K562 (cell line): ENCODE measurements at regions of chr17 and their contacts with region 1.

Region 1: GRCh38 chr17:17919169-17920107 is 52.8 kb downstream of the TOM1L2 start:
- DNase-seq: peak; percentile 63 to 83 (median 72)
- ATAC-seq: peak; percentile 89
- H3K4me3 ChIP-seq: no peak overlapping the region
- H3K27ac ChIP-seq: peak overlapping the region; percentile 53; the same call in 2 of the 3 replicates
- H3K4me1 ChIP-seq: peaks cover 15 to 29% of the 10 kb centered on the region in 2 experiments; a peak in 4 of 5 replicates
- H3K27me3 ChIP-seq: no peaks in the 10 kb centered on the region
- CTCF ChIP-seq: peak; percentile 81 to 90 (median 83)
- EP300 ChIP-seq: no peak
- POLR2A ChIP-seq: no peak
- RAD21 ChIP-seq: peak; percentile 74 to 88

Region 2: GRCh38 chr17:17675925-17676534 is 243.4 kb before region 1 on chr17:
- CTCF ChIA-PET with region 1: no interaction called
- POLR2A ChIA-PET with region 1: no interaction called
- in situ Hi-C with region 1: no loop called
- intact Hi-C with region 1: loop called (anchors 10 kb)
- DNase-seq: no peak
- ATAC-seq: peak; percentile 45; the same call in 2 of the 3 replicates
- H3K4me3 ChIP-seq: no peak overlapping the region
- H3K27ac ChIP-seq: no peak overlapping the region
- H3K4me1 ChIP-seq: peaks cover 2 to 3% of the 10 kb centered on the region in 2 experiments; a peak in 3 of 5 replicates
- H3K27me3 ChIP-seq: 0 out of 5 replicates have a peak, but pooled peaks cover 0 to 6% of the 10 kb centered on the region in 2 experiments
- CTCF ChIP-seq: no peak
- EP300 ChIP-seq: no peak
- POLR2A ChIP-seq: no peak
- RAD21 ChIP-seq: no peak

Region 3: GRCh38 chr17:17890773-17891759 is 28.4 kb before region 1 on chr17:
- CTCF ChIA-PET with region 1: interaction called, 9 read pairs
- POLR2A ChIA-PET with region 1: no interaction called
- in situ Hi-C with region 1: no loop called
- intact Hi-C with region 1: loop called (anchors 2 kb)
- DNase-seq: peak; percentile 66 to 77 (median 72)
- ATAC-seq: peak; percentile 99
- H3K4me3 ChIP-seq: no peak overlapping the region
- H3K27ac ChIP-seq: no peak overlapping the region
- H3K4me1 ChIP-seq: peaks cover 0 to 7% of the 10 kb centered on the region in 2 experiments; a peak in 2 of 5 replicates
- H3K27me3 ChIP-seq: no peaks in the 10 kb centered on the region
- CTCF ChIP-seq: peak; percentile 79 to 87 (median 87)
- EP300 ChIP-seq: no peak
- POLR2A ChIP-seq: no peak
- RAD21 ChIP-seq: peak; percentile 84 to 94

Region 4: DNA sequence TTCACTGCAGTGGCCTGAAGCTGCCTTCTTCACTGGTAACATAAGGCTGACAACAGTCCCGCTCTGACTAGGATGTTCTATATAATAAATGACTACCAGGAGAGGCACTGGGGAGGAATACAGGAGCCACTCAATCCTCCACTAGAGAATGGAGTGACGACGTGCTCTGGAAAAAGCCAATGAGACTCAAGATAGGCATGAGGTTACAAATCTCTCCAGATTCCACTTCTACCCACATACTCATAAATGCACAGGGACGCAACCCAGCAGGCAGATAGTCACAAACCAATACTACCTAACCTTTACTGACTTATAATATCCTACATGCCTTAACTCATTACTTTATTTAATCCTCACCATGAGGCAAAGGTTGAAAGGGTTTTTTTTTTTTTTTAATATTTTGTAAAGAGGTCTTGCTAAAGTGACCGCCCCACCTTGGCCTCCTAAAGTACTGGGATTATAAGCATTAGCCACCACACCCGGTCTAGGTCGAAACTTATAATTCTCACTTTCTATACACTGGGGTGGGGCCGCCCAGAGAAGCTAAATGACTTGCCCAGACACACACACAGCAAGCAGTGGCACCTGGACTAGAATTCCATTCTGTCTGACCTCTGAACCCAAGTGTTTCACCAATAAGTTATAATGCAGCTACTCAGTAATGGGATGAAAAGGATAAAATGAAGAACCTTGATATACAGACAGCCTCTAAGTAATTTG is 19.1 kb after region 1 on chr17:
- CTCF ChIA-PET with region 1: no interaction called
- POLR2A ChIA-PET with region 1: no interaction called
- in situ Hi-C with region 1: no loop called
- intact Hi-C with region 1: no loop called
- DNase-seq: no peak
- ATAC-seq: no peak
- H3K4me3 ChIP-seq: no peak overlapping the region
- H3K27ac ChIP-seq: no peak overlapping the region
- H3K4me1 ChIP-seq: peaks cover 4 to 8% of the 10 kb centered on the region in 2 experiments; a peak in 4 of 5 replicates
- H3K27me3 ChIP-seq: no peaks in the 10 kb centered on the region
- CTCF ChIP-seq: no peak
- EP300 ChIP-seq: no peak
- POLR2A ChIP-seq: no peak
- RAD21 ChIP-seq: no peak

Region 5: DNA sequence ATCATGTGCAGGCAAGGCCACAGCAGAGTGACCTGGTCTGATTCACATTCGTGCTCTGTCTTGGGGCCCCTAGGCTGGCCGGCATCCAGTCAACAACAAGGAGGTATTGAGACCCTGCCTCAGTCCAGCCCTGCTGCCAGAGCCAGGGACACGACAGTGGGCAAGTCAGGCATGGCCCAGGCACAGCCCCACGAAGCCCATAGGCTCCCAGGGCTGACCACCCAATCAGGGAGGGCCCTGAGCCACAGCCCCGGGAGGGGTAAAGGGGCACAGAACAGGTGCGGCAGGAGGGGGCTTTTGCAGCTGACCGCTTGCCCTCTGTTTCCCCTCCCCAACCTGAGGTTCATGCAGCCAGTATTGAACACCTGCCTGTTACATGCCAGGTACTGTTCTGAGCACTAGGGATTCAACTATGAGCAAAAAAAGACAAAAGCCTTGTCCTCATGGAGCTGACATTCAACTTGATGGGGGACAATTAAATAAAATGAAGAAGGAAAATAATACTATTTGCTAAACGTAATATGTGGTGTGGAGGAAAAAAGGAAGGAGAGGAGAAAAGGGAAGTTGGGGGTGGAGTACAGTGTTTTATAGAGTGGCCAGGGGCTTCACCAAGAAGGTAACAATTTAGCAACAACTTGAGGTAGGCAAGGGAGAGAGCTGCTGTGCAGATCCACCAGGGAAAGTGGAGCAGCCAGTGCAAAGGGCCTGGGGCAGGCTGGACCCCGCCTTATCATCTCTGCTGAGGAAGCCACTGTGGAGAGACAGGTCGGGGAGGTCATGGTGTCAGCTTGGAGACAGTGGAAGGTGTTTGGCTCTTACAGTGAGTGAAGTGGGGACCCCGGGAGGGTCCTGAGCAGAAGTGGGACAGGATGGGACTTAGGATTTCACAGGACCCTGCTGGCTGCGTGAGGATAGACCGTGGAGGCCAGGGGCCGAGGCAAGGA is 59.3 kb after region 1 on chr17:
- CTCF ChIA-PET with region 1: no interaction called
- POLR2A ChIA-PET with region 1: no interaction called
- in situ Hi-C with region 1: no loop called
- intact Hi-C with region 1: no loop called
- DNase-seq: no peak
- ATAC-seq: no peak
- H3K4me3 ChIP-seq: no peak overlapping the region
- H3K27ac ChIP-seq: no peak overlapping the region
- H3K4me1 ChIP-seq: peaks cover 0 to 4% of the 10 kb centered on the region in 2 experiments; a peak in 3 of 5 replicates
- H3K27me3 ChIP-seq: no peaks in the 10 kb centered on the region
- CTCF ChIP-seq: no peak
- EP300 ChIP-seq: no peak
- POLR2A ChIP-seq: no peak
- RAD21 ChIP-seq: no peak